Activated naive CD4-positive, alpha-beta T cell treated with anti-CD3 and anti-CD28 coated beads, Interleukin-2, amount 10 ng/mL, durations not matched to agents 7 days and 5 days (primary cell): ENCODE measurements at regions of chr7 and their contacts with region 1.

Region 1: DNA sequence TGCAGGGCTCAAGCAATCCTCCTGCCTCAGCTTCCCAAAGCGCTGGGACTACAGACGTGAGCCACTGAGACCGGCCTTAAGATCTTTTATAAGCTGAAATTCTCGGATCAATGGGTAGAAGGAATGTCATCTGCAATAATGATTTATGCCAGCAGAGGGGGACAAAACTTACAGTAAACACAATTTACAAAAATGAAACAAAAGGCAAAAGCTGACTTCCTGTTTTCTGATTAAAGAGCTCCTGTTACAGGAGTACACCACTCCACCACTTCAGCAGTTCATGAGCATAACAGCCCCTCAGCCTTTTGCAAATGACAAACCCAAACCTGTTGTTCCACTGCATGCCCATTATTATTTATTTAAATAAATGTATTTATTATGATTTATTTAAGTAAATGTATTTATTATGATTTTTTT is 88.5 kb upstream of the ATP6V0A4 start:
- DNase-seq: peak; percentile 49
- H3K4me3 Mint-ChIP-seq: no peak overlapping the region
- H3K27ac Mint-ChIP-seq: peak overlapping the region; percentile 77
- H3K4me1 Mint-ChIP-seq: peaks cover 37% of the 10 kb centered on the region
- H3K27me3 Mint-ChIP-seq: peaks cover 15% of the 10 kb centered on the region

Region 2: GRCh38 chr7:138875794-138876193 is 10.7 kb before region 1 on chr7:
- CTCF ChIA-PET with region 1: interaction called, 24 read pairs
- DNase-seq: peak; percentile 75
- H3K4me3 Mint-ChIP-seq: no peak overlapping the region
- H3K27ac Mint-ChIP-seq: peak overlapping the region; percentile 70
- H3K4me1 Mint-ChIP-seq: peaks cover 18% of the 10 kb centered on the region
- H3K27me3 Mint-ChIP-seq: peaks cover 3% of the 10 kb centered on the region

Region 3: DNA sequence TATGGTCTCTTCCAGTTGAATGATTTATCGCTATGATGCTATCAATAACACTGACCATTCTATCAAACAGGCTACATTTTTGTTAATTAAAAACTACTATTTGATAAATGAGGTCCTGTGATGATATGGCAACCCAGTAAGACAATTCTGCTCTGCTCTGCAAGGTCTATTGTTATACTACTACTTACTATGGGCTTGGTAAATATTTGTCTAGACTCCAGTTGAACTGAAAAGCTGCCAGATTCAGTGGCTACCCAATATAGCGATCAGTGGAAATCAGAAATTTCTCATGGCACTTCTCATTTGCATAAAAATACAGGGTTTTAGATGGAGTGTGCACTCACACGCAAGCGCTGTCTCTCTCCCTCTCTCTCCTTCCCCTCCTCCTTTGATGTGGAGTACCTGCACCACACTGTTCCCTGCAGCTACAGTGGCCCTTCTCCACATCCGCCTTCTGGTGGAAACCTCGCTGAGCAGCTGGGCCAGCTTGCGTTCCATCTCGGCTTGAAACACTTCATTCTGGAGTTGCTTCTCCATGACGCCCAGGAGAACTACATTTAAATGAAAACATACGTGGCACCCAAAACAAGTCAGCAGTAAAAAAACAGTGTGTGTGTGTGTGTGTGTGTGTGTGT is 16.8 kb after region 1 on chr7:
- CTCF ChIA-PET with region 1: interaction called, 16 read pairs
- DNase-seq: peak; percentile 93
- H3K4me3 Mint-ChIP-seq: peak overlapping the region; percentile 66
- H3K27ac Mint-ChIP-seq: peak overlapping the region; percentile 90
- H3K4me1 Mint-ChIP-seq: peaks cover 62% of the 10 kb centered on the region
- H3K27me3 Mint-ChIP-seq: peaks cover 42% of the 10 kb centered on the region

Region 4: DNA sequence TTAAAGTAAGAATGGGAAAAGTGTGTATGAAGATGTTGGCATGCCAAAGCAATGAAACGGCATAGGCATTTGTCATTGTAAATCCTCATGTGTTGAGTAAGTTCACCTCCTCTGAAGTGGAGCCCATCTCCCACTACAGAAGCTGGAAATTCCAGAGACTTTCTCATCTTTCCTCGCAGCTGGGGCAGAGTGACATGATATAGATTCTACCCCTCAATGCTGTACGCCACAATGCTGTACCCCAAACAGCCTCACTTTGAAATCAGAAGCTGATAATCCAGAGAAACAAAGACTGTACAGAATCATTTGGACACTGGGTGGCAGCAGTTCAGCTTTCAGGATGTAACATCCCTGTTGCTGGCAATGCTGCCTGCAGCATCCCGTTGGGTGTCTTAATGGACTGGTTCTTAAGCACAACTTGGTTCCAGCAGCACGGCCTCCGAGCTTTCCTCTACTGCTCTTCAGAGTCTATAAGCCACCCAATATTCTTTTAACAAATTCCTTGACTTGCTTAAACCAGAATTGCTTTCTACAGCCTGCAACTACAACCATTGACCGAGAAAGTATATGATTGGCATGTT is 130.5 kb after region 1 on chr7:
- CTCF ChIA-PET with region 1: interaction called, 23 read pairs
- DNase-seq: peak; percentile 79
- H3K4me3 Mint-ChIP-seq: no peak overlapping the region
- H3K27ac Mint-ChIP-seq: no peak overlapping the region
- H3K4me1 Mint-ChIP-seq: peaks cover 9% of the 10 kb centered on the region
- H3K27me3 Mint-ChIP-seq: peaks cover 17% of the 10 kb centered on the region

Region 5: GRCh38 chr7:139075031-139075652 is 188.6 kb after region 1 on chr7:
- CTCF ChIA-PET with region 1: interaction called, 14 read pairs
- DNase-seq: peak; percentile 80
- H3K4me3 Mint-ChIP-seq: peak overlapping the region; percentile 13
- H3K27ac Mint-ChIP-seq: peak overlapping the region; percentile 82
- H3K4me1 Mint-ChIP-seq: peaks cover 83% of the 10 kb centered on the region
- H3K27me3 Mint-ChIP-seq: no peaks in the 10 kb centered on the region